ENCODE measurements at regions of chr17 and their contacts with region 1.

Region 1: DNA sequence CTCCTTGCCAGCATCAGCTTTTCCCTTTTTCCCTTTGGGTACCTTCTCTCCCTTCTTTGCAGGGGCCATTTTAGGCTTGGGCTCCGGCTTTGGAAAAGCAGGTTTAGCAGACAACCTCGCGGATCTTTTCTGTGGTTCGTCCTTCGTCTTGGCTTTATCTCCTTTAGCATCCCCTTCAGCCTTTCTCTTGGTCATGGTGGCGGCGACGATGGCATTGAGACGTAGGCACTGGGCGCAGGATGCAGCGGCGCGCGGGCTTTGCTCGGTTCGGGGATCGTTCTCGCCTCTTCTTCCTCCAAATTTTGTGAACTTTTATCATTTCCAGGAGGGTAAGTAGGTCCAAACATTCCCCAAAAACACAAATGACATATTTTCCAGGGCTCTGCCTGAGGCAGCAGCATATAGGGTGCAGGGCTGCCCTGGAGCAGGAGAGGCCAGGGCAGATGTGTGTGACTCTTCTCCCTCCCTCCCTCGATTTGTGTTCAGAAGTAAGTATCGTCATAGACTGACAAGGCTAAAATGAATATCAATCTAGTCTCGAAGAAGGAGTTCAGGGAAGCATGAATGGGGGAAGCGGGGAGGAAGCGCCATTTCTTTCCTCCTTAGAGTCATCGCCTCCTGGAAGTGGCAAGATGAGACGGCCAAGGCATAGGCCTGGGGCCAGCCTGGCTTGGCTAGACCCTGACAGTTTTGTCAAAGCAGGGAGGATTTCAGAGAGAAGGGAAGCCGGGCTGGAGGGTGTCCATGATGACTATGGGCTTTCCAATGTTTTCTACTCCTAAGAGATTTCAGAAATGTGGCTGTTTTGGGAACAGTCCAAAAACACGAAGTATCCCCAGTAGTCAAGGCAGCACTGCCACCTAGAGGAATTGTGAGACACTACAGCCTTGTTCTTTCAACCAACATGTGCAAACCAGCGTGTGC is 13.2 kb downstream of the CHCT1 start:
- DNase-seq: peak; percentile 71
- H3K4me3 ChIP-seq: no peak overlapping the region
- H3K27ac ChIP-seq: no peak overlapping the region
- H3K4me1 ChIP-seq: peaks cover 5% of the 10 kb centered on the region
- H3K27me3 ChIP-seq: peaks cover 2% of the 10 kb centered on the region
- CTCF ChIP-seq: peak; percentile 88 to 89

Region 2: DNA sequence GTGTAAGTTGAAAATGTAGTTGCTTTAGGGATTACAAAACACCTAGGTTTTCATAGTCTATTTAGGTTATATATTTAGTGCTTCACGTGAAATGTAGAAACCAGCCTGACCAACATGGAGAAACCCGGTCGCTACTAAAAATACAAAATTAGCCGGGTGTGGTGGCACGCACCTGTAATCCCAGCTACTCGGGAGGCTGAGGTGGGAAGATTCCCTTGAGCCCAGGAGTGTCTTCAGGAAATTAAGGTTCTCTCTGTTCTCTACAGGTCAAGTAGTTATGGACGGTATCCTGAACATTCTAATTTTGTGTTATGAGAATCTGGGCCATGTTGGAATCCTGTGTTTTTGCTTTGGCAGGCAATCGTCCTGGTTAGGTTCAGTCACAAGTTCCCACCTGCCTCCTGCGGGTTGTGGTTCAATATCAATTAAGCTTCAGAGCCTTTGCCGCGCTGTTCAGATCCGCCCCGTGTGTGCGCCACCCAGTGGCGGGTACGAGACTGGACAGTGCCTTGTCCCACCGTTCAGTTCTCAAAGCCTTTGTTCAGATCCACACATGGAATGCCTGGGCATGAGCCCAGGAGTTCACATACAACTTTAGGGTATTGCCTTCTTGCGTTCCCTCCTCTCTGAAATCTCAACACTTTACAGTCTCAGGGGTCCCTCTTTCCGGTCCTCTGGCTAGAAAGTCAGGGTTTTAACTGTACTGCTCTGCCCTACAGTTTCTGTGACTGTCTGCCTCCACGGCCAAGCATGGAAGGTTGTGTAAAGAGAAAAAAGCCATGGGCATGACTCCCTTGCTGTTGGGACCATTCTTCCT is 398.5 kb before region 1 on chr17:
- CTCF ChIA-PET with region 1: no interaction called
- dilution Hi-C with region 1: no loop called
- in situ Hi-C with region 1: no loop called
- intact Hi-C with region 1: loop called (anchors 5 kb)
- DNase-seq: peak; percentile 75
- H3K4me3 ChIP-seq: no peak overlapping the region
- H3K27ac ChIP-seq: no peak overlapping the region
- H3K4me1 ChIP-seq: no peaks in the 10 kb centered on the region
- H3K27me3 ChIP-seq: no peaks in the 10 kb centered on the region
- CTCF ChIP-seq: peak; percentile 96 to 98

Region 3: DNA sequence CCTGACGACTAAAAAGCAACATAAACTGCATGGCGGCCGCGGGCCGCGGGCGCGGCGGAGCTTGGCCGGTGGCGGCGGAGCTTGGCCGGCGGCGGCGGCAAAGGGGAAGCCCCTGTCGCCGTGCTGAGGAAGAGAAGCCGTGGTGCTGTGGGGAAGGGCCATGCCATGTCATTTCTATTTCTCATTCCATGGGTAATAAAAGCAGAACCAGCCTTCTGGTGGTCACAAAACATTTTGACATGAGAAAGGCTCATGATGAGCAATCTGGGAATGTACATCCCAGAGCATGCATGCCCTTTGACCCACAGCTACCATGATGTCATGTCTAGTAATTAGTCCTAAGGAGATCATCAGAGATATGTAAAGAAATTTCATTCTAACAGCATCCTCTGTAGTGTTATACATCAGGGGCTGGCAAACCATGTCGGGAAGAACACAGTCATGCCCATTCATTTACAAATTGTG is 332.8 kb before region 1 on chr17:
- CTCF ChIA-PET with region 1: no interaction called
- dilution Hi-C with region 1: no loop called
- in situ Hi-C with region 1: no loop called
- intact Hi-C with region 1: loop called (anchors 10 kb)
- DNase-seq: no peak
- H3K4me3 ChIP-seq: no peak overlapping the region
- H3K27ac ChIP-seq: no peak overlapping the region
- H3K4me1 ChIP-seq: no peaks in the 10 kb centered on the region
- H3K27me3 ChIP-seq: no peaks in the 10 kb centered on the region
- CTCF ChIP-seq: no peak

Region 4: DNA sequence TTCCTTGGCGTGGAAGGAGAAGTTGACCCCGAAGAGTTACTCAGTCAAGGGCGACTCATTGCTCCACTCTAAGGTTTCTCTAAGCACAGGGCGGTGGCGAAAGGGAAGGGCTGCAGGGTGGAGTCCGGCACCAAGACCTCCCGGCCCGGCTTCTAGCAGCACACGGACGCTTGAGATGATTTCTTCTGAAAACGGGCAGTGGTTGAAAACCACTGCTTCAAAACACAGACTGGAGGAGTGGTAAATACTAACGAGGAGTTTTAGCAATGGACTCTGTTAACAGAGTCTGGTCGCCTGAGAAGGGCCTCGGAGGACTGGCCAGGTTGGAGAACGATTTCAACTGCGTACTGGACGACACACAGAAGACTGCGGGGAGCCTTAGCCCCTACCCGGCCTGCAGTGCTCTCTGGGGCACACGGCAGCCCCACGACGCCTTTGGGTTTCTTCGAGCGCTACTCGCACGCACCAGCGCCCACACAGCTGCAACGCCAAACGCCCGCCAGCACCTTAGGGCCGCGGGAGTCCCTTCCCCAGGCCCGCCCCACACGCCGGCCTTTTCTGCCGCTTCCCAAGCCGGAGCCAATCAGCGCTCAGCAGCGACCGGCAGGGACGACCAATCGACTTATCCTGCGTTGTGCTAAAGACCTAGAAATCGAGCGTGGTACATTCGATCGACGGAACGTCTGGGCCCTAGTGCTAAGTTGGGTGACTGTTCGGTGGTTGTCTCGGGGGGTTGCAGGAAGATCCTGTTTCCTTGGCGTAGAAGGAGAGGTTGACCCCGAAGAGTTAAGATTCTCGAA is 300.2 kb before region 1 on chr17:
- CTCF ChIA-PET with region 1: no interaction called
- dilution Hi-C with region 1: no loop called
- in situ Hi-C with region 1: loop called (anchors 25 kb)
- intact Hi-C with region 1: no loop called
- DNase-seq: peak; percentile 92
- H3K4me3 ChIP-seq: peak overlapping the region; percentile 68 to 85 (median 68)
- H3K27ac ChIP-seq: peak overlapping the region; percentile 31
- H3K4me1 ChIP-seq: peaks cover 9% of the 10 kb centered on the region
- H3K27me3 ChIP-seq: peaks cover 10% of the 10 kb centered on the region
- CTCF ChIP-seq: no peak

Region 5: DNA sequence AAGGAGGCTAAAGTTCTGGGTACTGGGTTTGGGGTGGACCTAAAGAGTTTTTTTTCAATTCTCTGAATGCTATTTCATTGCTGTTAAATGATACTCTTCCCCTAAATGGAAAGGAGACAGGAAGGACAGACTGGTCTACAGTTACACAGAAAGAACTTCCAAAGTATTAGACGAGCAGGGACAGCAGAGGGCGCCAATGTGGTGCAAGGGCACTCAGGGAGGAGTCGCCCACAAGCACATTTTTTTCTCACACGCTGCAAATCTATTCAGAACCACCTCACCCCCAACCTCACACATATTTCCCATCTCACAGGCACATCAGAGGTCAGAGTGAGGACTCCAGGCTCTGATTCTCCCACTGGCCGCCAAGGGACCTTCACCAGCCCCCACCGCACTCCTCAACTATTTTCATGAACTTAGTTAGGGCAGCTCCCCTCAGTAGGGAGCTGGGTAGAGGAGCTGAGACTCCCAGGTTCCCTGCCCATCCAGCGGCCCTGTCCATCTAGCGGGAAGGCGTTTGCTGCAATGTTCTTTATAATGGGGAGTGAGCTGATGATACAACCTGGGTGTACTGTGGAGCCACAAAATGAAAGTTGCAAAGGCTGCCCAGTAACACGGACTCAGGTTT is 292.5 kb before region 1 on chr17:
- CTCF ChIA-PET with region 1: no interaction called
- dilution Hi-C with region 1: no loop called
- in situ Hi-C with region 1: loop called (anchors 25 kb)
- intact Hi-C with region 1: loop called (anchors 1 kb)
- DNase-seq: peak; percentile 77
- H3K4me3 ChIP-seq: peak overlapping the region in 1 of 3 experiments; percentile 5
- H3K27ac ChIP-seq: peak overlapping the region; percentile 31
- H3K4me1 ChIP-seq: peaks cover 27% of the 10 kb centered on the region
- H3K27me3 ChIP-seq: peaks cover 13% of the 10 kb centered on the region
- CTCF ChIP-seq: peak; percentile 85 to 86

Region 6: DNA sequence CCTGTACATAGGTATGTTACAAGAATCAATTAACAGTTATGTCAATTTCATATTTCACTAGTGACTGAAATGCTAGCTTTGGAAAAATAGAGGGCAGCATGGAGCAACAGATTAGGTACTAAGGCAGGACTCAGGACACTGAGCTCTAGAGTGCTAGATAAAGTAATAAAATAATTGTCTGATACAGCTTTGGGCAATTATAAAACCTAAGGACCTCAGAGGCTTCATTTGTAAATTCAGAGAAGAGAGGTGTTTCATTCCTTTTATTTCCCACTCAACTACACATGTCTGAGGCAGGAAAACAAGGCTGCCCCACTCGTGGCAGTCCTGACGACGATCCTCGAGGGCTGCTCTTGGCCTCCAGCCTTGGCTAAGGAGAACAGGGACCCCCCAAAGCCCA is 204.3 kb before region 1 on chr17:
- CTCF ChIA-PET with region 1: no interaction called
- dilution Hi-C with region 1: no loop called
- in situ Hi-C with region 1: loop called in 1 of 2 experiments (anchors 25 kb)
- intact Hi-C with region 1: loop called (anchors 1 kb)
- DNase-seq: peak; percentile 9
- H3K4me3 ChIP-seq: no peak overlapping the region
- H3K27ac ChIP-seq: no peak overlapping the region
- H3K4me1 ChIP-seq: peaks cover 3% of the 10 kb centered on the region
- H3K27me3 ChIP-seq: no peaks in the 10 kb centered on the region
- CTCF ChIP-seq: peak; percentile 30 to 56

Region 7: GRCh38 chr17:60392042-60392844 is 43.3 kb before region 1 on chr17 and contains the start of gene USP32:
- CTCF ChIA-PET with region 1: no interaction called
- dilution Hi-C with region 1: no loop called
- in situ Hi-C with region 1: no loop called
- intact Hi-C with region 1: no loop called
- DNase-seq: peak; percentile 98
- H3K4me3 ChIP-seq: peak within 1 kb of the TSS; percentile 66 to 93 (median 75)
- H3K27ac ChIP-seq: peak within 1 kb of the TSS; percentile 91
- H3K4me1 ChIP-seq: peaks cover 22% of the 10 kb centered on the region
- H3K27me3 ChIP-seq: no peaks in the 10 kb centered on the region
- CTCF ChIP-seq: peak in 1 of 2 donors; percentile 61
- total RNA-seq, gene USP32: 56.8 to 63.0 TPM

Measured in mammary epithelial cell (primary cell).